CD8-positive, alpha-beta T cell (primary cell): ENCODE measurements at regions of chr2 and their contacts with region 1.

Region 1: GRCh38 chr2:84865181-84865783 is 15.6 kb downstream of the TRABD2A start:
- DNase-seq: peak in 3 of 9 experiments; percentile 49 to 73 (median 60)
- ATAC-seq: peak; percentile 57
- H3K4me3 ChIP-seq: no peak overlapping the region
- H3K4me3 Mint-ChIP-seq: peak overlapping the region; percentile 61
- H3K27ac ChIP-seq: no peak overlapping the region
- H3K27ac Mint-ChIP-seq: peak overlapping the region; percentile 91
- H3K4me1 ChIP-seq: peaks cover 80% of the 10 kb centered on the region
- H3K4me1 Mint-ChIP-seq: peaks cover 85% of the 10 kb centered on the region
- H3K27me3 ChIP-seq: no peaks in the 10 kb centered on the region
- H3K27me3 Mint-ChIP-seq: no peaks in the 10 kb centered on the region
- CTCF ChIP-seq: peak; percentile 72

Region 2: DNA sequence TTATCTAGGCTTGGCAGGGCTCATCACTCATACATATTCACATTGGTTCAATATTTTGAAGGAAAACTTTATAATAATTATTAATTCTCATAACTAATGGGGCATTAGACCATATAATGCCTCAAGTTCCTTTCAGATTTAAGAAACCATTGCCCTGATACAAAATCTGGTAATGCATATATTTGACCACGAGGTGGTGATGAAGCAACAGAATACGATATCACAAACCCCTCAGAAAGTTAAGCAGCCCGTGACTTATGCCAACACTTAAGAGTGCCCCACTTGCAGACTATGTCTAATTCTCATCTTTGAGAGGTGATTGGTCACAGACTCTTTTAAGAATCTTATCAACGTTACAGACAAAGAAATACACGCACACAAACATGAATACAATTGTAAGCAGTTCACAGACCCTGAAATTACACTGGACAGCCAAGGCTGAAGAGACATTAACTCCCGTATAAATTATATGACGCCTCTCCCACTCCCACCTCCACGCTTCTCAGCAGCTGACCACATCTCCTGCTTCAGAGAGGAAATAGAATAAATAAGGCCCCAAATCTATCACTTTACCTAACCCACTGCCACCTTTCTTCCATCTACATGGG is 369.6 kb before region 1 on chr2:
- CTCF ChIA-PET with region 1: interaction called, 6 read pairs
- POLR2A ChIA-PET with region 1: no interaction called
- intact Hi-C with region 1: loop called (anchors 1 kb)
- DNase-seq: peak in 6 of 9 experiments; percentile 22 to 87 (median 40)
- ATAC-seq: peak; percentile 99
- H3K4me3 ChIP-seq: no peak overlapping the region
- H3K4me3 Mint-ChIP-seq: no peak overlapping the region
- H3K27ac ChIP-seq: no peak overlapping the region
- H3K27ac Mint-ChIP-seq: peak overlapping the region; percentile 30
- H3K4me1 ChIP-seq: peaks cover 5% of the 10 kb centered on the region
- H3K4me1 Mint-ChIP-seq: peaks cover 18% of the 10 kb centered on the region
- H3K27me3 ChIP-seq: no peaks in the 10 kb centered on the region
- H3K27me3 Mint-ChIP-seq: no peaks in the 10 kb centered on the region
- CTCF ChIP-seq: peak; percentile 81

Region 3: DNA sequence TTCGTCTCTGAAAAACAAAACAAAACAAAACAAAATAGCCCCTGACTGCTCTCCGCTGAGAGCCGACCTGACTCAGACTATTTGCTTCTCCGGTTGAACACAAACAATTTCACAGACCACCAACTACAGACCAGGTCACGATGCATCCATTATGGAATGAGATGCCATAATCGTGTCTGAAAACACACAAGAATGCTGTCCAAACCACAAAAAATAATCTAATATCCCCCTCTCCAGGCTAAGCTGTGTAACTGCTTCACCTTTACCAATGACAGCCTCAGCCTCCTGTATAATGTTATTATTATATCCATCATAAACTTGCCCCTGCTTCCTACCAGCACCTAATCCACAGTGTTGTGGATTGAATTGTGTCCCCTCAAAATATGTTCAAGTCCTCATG is 234.2 kb before region 1 on chr2:
- CTCF ChIA-PET with region 1: interaction called, 5 read pairs
- POLR2A ChIA-PET with region 1: no interaction called
- intact Hi-C with region 1: loop called (anchors 1 to 5 kb)
- DNase-seq: peak in 2 of 9 experiments; percentile 40 to 57
- ATAC-seq: peak; percentile 51
- H3K4me3 ChIP-seq: no peak overlapping the region
- H3K4me3 Mint-ChIP-seq: no peak overlapping the region
- H3K27ac ChIP-seq: no peak overlapping the region
- H3K27ac Mint-ChIP-seq: no peak overlapping the region
- H3K4me1 ChIP-seq: peaks cover 22% of the 10 kb centered on the region
- H3K4me1 Mint-ChIP-seq: peaks cover 41% of the 10 kb centered on the region
- H3K27me3 ChIP-seq: no peaks in the 10 kb centered on the region
- H3K27me3 Mint-ChIP-seq: no peaks in the 10 kb centered on the region
- CTCF ChIP-seq: peak; percentile 51

Region 4: GRCh38 chr2:84741296-84741765 is 124.0 kb before region 1 on chr2:
- CTCF ChIA-PET with region 1: interaction called, 17 read pairs
- POLR2A ChIA-PET with region 1: interaction called, 6 read pairs
- intact Hi-C with region 1: loop called (anchors 1 to 5 kb)
- DNase-seq: peak; percentile 13 to 80 (median 41)
- ATAC-seq: peak; percentile 99
- H3K4me3 ChIP-seq: no peak overlapping the region
- H3K4me3 Mint-ChIP-seq: no peak overlapping the region
- H3K27ac ChIP-seq: peak overlapping the region in 1 of 2 experiments; percentile 67
- H3K27ac Mint-ChIP-seq: peak overlapping the region; percentile 73
- H3K4me1 ChIP-seq: peaks cover 28% of the 10 kb centered on the region
- H3K4me1 Mint-ChIP-seq: peaks cover 37% of the 10 kb centered on the region
- H3K27me3 ChIP-seq: no peaks in the 10 kb centered on the region
- H3K27me3 Mint-ChIP-seq: no peaks in the 10 kb centered on the region
- CTCF ChIP-seq: peak; percentile 33

Region 5: GRCh38 chr2:84846041-84846663 is 19.1 kb before region 1 on chr2:
- CTCF ChIA-PET with region 1: interaction called, 16 read pairs
- POLR2A ChIA-PET with region 1: interaction called, 6 read pairs
- intact Hi-C with region 1: loop called in 1 of 2 experiments (anchors 2 kb)
- DNase-seq: peak in 7 of 9 experiments; percentile 37 to 87 (median 65)
- ATAC-seq: peak; percentile 70
- H3K4me3 ChIP-seq: peak overlapping the region in 1 of 2 experiments; percentile 7
- H3K4me3 Mint-ChIP-seq: peak overlapping the region; percentile 65
- H3K27ac ChIP-seq: peak overlapping the region; percentile 68 to 88
- H3K27ac Mint-ChIP-seq: peak overlapping the region; percentile 94
- H3K4me1 ChIP-seq: peaks cover 97% of the 10 kb centered on the region
- H3K4me1 Mint-ChIP-seq: peaks cover 94% of the 10 kb centered on the region
- H3K27me3 ChIP-seq: no peaks in the 10 kb centered on the region
- H3K27me3 Mint-ChIP-seq: no peaks in the 10 kb centered on the region
- CTCF ChIP-seq: no peak